ENCODE measurements at regions of chr2 and their contacts with region 1.

Region 1: GRCh38 chr2:173354601-173355131 is at the start of gene CDCA7:
- DNase-seq: peak; percentile 77
- H3K4me3 Mint-ChIP-seq: peak within 1 kb of the TSS; percentile 93
- H3K27ac Mint-ChIP-seq: peak within 1 kb of the TSS; percentile 97
- H3K4me1 Mint-ChIP-seq: peaks cover 54% of the 10 kb centered on the region
- H3K27me3 Mint-ChIP-seq: peaks cover 2% of the 10 kb centered on the region
- total RNA-seq, gene CDCA7: 112 and 115 TPM in 2 replicates

Region 2: DNA sequence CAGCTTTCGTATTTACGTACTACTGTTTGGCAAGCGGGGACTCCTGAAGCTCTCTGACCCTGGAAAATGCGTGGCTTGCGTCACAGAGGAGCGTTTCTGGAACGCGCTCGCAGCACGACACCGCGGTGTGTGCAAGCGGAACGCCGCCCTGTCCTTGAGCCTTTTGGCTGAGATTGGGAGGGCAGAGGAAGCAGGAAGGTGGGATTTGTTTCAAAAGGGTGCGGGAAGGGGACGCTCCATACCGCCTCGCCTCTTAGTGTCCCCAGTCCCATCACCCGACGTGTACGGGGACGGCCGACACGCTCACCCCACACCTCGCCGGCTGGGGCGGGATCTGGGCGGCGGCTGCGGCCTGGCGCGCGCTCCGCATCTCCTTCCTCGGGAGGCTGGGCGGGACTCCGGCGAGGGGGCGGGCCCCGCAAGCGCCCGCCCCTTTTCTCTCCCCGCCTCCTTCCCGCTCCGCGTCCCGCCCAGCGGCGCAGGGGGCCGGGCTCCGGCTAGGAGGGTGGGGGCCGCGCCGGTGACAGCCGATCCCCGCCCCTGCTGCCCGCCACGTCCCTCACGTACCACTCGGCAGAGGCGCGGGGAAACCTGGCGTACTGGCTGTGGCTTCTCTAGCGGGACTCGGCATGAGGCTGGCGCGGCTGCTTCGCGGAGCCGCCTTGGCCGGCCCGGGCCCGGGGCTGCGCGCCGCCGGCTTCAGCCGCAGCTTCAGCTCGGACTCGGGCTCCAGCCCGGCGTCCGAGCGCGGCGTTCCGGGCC is 799.0 kb before region 1 on chr2 and contains the start of gene PDK1:
- intact Hi-C with region 1: loop called (anchors 1 kb)
- DNase-seq: peak; percentile 91
- H3K4me3 Mint-ChIP-seq: peak within 1 kb of the TSS; percentile 97
- H3K27ac Mint-ChIP-seq: peak within 1 kb of the TSS; percentile 98
- H3K4me1 Mint-ChIP-seq: peaks cover 65% of the 10 kb centered on the region
- H3K27me3 Mint-ChIP-seq: no peaks in the 10 kb centered on the region
- total RNA-seq, gene PDK1: 27.6 and 35.8 TPM in 2 replicates

Region 3: DNA sequence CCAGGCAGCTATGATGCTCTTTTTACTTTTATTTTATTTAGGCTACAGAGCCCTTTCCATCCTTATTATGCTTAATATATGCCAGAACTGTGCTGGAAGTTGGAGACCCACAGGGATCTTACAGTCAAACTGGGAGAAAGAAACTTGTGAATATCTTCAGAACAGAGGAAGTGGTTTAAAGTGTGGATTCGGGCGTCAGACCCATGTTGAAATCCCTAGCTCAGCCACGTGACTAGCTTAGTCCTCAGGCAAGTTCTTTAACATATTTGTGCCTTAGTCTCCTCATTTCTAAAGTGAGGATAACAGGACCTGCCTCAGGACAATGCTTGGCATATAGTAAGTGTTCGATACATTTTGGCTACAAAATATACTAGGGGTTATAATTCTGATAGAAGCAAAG is 220.0 kb before region 1 on chr2:
- intact Hi-C with region 1: loop called (anchors 2 kb)
- DNase-seq: no peak
- H3K4me3 Mint-ChIP-seq: peak overlapping the region; percentile 58
- H3K27ac Mint-ChIP-seq: peak overlapping the region; percentile 76
- H3K4me1 Mint-ChIP-seq: peaks cover 76% of the 10 kb centered on the region
- H3K27me3 Mint-ChIP-seq: peaks cover 21% of the 10 kb centered on the region

Region 4: GRCh38 chr2:173239644-173240043 is 115.0 kb before region 1 on chr2:
- intact Hi-C with region 1: loop called (anchors 2 kb)
- DNase-seq: peak; percentile 6
- H3K4me3 Mint-ChIP-seq: no peak overlapping the region
- H3K27ac Mint-ChIP-seq: no peak overlapping the region
- H3K4me1 Mint-ChIP-seq: peaks cover 11% of the 10 kb centered on the region
- H3K27me3 Mint-ChIP-seq: no peaks in the 10 kb centered on the region

Region 5: GRCh38 chr2:173370198-173370597 is 15.5 kb after region 1 on chr2:
- intact Hi-C with region 1: loop called (anchors 1 kb)
- DNase-seq: peak; percentile 2
- H3K4me3 Mint-ChIP-seq: peak overlapping the region; percentile 6
- H3K27ac Mint-ChIP-seq: peak overlapping the region; percentile 88
- H3K4me1 Mint-ChIP-seq: peaks cover 26% of the 10 kb centered on the region
- H3K27me3 Mint-ChIP-seq: no peaks in the 10 kb centered on the region

Region 6: GRCh38 chr2:173462892-173463840 is 108.5 kb after region 1 on chr2:
- intact Hi-C with region 1: no loop called
- DNase-seq: no peak
- H3K4me3 Mint-ChIP-seq: no peak overlapping the region
- H3K27ac Mint-ChIP-seq: no peak overlapping the region
- H3K4me1 Mint-ChIP-seq: no peaks in the 10 kb centered on the region
- H3K27me3 Mint-ChIP-seq: peaks cover 10% of the 10 kb centered on the region

Region 7: DNA sequence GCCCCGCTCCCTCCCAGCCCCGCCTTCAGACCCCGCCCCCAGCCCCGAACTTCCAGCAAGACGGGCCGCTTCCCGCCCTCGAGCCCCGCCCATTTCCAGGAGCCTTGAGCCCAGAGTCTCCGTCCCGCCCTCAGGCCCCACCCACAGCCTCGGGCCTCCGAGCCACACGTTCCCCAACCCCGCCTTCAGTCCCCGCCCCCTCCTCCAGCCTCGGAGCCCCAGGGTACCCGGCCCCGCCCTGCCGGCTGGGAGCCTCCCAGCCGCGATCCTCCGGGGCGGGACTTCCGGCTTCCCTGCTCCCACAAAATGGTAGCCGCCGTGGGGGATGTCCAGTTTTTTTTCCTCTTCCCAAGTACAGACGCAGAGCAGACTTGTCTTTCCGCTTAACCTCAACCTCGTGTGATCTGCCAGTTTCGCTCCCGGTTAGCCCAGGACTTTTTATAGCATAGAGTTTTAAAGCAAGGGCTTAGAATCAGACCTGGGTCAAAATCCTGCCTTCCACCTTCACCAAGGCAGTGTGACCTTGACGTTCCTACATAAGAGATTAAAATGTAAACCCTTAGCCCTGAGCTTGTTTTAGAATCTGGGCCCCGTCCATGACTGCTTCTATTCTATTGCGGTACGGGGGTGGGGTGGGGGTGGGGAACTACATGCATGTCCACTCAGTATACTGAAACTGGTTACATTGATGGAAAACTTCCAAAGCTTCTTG is 1132.6 kb after region 1 on chr2:
- intact Hi-C with region 1: loop called (anchors 10 kb)
- DNase-seq: peak; percentile 88
- H3K4me3 Mint-ChIP-seq: peak overlapping the region; percentile 89
- H3K27ac Mint-ChIP-seq: peak overlapping the region; percentile 68
- H3K4me1 Mint-ChIP-seq: peaks cover 72% of the 10 kb centered on the region
- H3K27me3 Mint-ChIP-seq: no peaks in the 10 kb centered on the region